ENCODE measurements at regions of chr17 and their contacts with region 1.

Region 1: GRCh38 chr17:49031965-49032928 is 35.1 kb downstream of the IGF2BP1 start:
- DNase-seq: no peak
- H3K4me3 ChIP-seq: no peak overlapping the region
- H3K27ac ChIP-seq: no peak overlapping the region
- H3K4me1 ChIP-seq: peaks cover 0 to 5% (median 0%) of the 10 kb centered on the region in 6 donors
- H3K27me3 ChIP-seq: peaks cover 0 to 63% (median 6%) of the 10 kb centered on the region in 7 donors
- CTCF ChIP-seq: peak; percentile 39 to 76 (median 71)
- POLR2A ChIP-seq: no peak

Region 2: DNA sequence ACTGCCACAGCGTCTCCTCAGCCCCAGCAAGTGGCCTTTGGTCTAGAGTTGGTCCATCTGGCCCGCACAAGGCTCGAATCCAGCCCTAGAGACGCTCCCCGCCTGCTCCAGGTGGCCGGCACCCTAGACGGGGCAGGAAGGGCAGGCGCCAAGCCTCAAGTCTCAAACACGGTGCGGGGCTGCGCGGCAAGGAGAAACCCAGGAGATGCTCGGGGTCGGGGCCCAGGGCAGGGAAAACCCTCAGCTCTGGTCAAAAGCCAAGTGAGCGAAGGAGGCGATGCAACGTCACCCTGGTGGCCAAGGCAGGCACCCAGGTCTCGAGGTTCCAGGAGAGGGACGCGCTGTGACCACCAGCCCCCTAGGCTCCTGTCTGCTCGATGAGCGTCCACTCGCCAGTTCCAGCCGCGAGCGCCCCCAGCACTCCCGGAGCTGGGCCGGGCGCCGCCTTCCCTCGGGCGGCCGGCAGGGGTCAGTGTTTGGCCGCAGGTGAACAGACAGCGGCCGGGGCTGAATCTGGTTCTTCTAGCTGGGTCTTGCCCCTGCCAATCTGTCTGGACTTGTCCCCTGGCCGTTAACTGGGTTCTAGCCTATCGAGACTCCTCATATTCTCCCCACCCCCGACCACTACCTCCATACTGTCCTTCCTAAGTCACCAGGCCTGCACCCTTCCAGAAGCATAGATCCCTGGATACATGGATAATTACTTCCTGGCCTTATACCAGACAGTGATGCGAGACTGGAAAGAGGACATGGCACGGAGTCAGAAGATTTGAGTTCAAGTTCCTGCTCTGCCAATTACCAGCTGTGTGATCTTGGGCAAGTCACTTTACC is 353.9 kb before region 1 on chr17:
- intact Hi-C with region 1: loop called (anchors 10 kb)
- DNase-seq: peak; percentile 89
- H3K4me3 ChIP-seq: peak overlapping the region in 2 of 8 donors; percentile 7 to 55
- H3K27ac ChIP-seq: no peak overlapping the region
- H3K4me1 ChIP-seq: peaks cover 3 to 9% (median 6%) of the 10 kb centered on the region in 6 donors
- H3K27me3 ChIP-seq: peaks cover 0 to 89% (median 19%) of the 10 kb centered on the region in 7 donors
- CTCF ChIP-seq: peak; percentile 65 to 97 (median 90)
- POLR2A ChIP-seq: no peak

Region 3: DNA sequence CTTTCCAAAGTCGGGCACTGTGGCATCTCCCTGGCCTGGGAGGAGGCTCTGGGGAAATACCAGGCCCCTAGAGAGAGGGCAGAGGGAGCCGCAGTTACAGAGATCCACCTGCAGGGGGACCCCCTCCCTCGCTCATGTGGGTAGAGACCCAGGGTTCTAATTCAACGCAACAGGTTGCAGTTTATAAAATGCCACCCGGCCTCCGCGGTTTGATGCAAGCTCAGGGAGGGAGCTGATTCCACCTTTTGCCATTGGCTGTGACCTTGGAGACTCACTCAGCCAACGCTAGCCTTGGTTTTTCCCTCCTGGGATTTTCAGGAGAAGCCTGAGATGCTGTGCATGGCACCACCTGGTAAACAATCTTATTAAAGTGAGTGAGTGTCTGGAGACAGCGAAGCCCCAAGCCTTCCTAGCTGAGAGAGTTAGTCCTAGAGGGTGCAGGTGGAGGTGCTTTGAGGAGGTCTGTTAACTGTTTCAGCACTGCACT is 227.3 kb before region 1 on chr17:
- intact Hi-C with region 1: loop called (anchors 5 kb)
- DNase-seq: peak; percentile 85
- H3K4me3 ChIP-seq: no peak overlapping the region
- H3K27ac ChIP-seq: no peak overlapping the region
- H3K4me1 ChIP-seq: peaks cover 0 to 10% (median 3%) of the 10 kb centered on the region in 6 donors
- H3K27me3 ChIP-seq: peaks cover 0 to 40% (median 0%) of the 10 kb centered on the region in 7 donors
- CTCF ChIP-seq: peak; percentile 75 to 94 (median 87)
- POLR2A ChIP-seq: no peak

Region 4: GRCh38 chr17:48973806-48974205 is 58.4 kb before region 1 on chr17:
- intact Hi-C with region 1: no loop called
- DNase-seq: no peak
- H3K4me3 ChIP-seq: no peak overlapping the region
- H3K27ac ChIP-seq: no peak overlapping the region
- H3K4me1 ChIP-seq: no peaks in the 10 kb centered on the region
- H3K27me3 ChIP-seq: peaks cover 0 to 83% (median 0%) of the 10 kb centered on the region in 7 donors
- CTCF ChIP-seq: no peak
- POLR2A ChIP-seq: no peak